Dendritic cell treated with granulocyte-macrophage colony-stimulating factor and Interleukin-4, amounts not matched to agents 40 ng/mL and 50 ng/mL, for 4 days (primary cell): ENCODE measurements at regions of chr20 and their contacts with region 1.

Region 1: DNA sequence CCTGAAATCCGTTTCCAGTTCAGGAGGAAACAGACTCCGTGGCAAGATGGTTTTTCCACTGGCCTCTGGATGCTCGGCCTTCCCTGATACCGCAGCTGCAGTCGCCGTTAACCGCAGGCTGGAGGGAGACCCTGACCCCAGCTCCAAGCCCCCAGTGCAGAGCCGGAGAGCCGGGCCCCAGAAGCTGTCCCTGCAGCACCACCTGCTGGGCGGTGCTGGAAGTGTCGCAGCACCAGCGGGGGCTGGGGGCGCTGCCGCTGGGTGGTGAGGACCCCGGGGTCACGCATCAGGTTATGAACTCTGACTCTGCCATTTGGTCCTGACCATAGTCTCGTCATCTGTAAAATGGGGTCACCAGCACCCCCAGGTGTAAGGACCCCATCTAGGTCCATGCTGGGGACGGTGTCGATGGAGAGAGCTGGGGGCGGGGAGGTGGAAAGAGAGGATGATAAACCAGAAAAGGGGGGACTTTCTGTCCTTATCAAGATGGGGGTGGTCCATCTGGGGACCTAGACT is 20.7 kb upstream of the CHRNA4 start:
- H3K4me3 Mint-ChIP-seq: no peak overlapping the region
- H3K27ac Mint-ChIP-seq: no peak overlapping the region
- H3K4me1 Mint-ChIP-seq: no peaks in the 10 kb centered on the region
- H3K27me3 Mint-ChIP-seq: peaks cover 36% of the 10 kb centered on the region

Region 2: DNA sequence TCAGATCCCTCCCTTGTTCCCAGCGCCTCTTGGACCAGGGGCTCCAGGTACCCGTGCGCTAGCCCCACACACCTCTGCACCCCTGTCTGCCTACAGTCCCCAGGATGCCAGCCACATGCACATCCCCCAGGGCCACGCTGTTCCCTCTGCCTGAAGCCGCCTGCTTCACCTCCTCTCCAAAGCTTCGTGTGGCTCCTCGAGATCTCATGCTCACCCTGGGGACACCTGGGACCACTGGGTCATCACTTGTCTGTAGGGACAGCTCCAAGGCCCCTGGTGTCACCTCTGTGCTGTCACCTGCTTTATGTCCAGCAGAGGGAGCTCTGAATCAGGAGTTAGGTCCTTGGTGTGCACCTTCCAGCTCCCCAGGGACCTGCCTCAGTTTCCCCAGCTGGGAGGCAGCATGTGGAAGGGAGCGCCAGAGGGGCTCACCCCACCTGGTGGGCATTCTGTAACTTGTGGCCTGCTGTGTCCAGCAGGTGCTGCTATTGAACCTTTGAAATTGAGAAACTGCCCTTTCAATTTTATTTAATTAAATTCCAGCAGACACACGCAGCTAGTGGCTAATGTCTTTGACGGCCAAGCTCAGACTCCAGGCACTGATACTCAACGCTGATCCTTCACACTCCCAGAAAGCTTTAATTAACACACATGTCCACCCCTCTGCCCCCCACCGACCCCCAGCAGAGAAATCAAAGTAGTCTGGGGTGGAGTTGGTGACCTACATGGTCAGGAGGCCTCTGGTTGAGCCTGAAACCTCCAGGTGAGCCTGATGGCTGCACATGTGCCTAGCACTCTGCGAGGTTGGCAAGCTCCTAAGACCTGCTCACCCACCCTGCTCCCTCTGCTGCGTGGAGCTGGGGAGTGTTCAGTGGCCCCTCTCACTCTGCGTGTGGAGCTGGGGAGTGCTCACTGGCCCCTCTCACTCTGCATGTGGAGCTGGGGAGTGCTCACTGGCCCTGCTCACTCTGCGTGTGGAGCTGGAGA is 158.4 kb before region 1 on chr20:
- intact Hi-C with region 1: loop called (anchors 5 kb)
- H3K4me3 Mint-ChIP-seq: no peak overlapping the region
- H3K27ac Mint-ChIP-seq: no peak overlapping the region
- H3K4me1 Mint-ChIP-seq: no peaks in the 10 kb centered on the region
- H3K27me3 Mint-ChIP-seq: peaks cover 21% of the 10 kb centered on the region

Region 3: GRCh38 chr20:63309261-63310071 is 72.4 kb before region 1 on chr20:
- intact Hi-C with region 1: loop called (anchors 1 kb)
- H3K4me3 Mint-ChIP-seq: no peak overlapping the region
- H3K27ac Mint-ChIP-seq: no peak overlapping the region
- H3K4me1 Mint-ChIP-seq: no peaks in the 10 kb centered on the region
- H3K27me3 Mint-ChIP-seq: peaks cover 4% of the 10 kb centered on the region

Region 4: GRCh38 chr20:63394069-63394919 is 12.4 kb after region 1 on chr20:
- intact Hi-C with region 1: no loop called
- H3K4me3 Mint-ChIP-seq: no peak overlapping the region
- H3K27ac Mint-ChIP-seq: no peak overlapping the region
- H3K4me1 Mint-ChIP-seq: no peaks in the 10 kb centered on the region
- H3K27me3 Mint-ChIP-seq: peaks cover 18% of the 10 kb centered on the region